A673 (cell line): ENCODE measurements at regions of chr2 and their contacts with region 1.

Region 1: DNA sequence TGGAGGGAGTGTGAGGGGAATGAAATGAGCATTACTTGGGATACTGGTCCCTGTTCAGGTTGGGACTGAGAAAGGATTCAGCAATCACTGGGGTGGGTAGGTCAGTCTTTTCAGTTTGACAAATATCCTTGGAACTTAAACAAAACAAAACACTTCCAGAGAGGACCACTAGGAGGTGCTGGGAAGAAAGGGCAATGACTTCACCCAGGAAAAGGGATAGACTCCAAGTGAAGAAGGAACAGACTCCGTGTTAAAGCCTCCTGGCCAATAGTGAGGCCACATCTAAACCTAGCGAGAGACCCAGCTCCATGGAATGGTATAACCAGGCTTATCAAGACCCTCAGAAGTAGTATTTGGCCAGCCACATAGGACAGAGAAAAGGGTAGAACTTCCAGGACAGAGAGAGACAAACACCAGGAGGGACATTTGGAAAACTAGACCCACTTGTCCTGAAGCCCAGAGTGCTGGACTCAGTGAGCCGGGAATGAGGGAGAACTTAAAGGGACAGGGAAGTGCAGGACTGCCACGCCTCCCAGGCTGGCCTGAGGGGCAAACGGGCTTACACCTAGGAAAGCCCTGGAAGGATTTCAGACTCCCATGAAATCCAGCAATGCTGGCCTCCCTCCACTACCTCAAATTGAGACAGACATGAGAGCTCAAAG is 19.6 kb upstream of the KCNG3 start:
- DNase-seq: peak; percentile 77
- H3K4me3 ChIP-seq: no peak overlapping the region
- H3K27ac ChIP-seq: no peak overlapping the region
- H3K4me1 ChIP-seq: peaks cover 5% of the 10 kb centered on the region
- H3K27me3 ChIP-seq: no peaks in the 10 kb centered on the region
- CTCF ChIP-seq: peak; percentile 76

Region 2: GRCh38 chr2:42124011-42124785 is 389.2 kb before region 1 on chr2:
- CTCF ChIA-PET with region 1: interaction called, 10 read pairs
- POLR2A ChIA-PET with region 1: no interaction called
- intact Hi-C with region 1: no loop called
- DNase-seq: no peak
- H3K4me3 ChIP-seq: no peak overlapping the region
- H3K27ac ChIP-seq: no peak overlapping the region
- H3K4me1 ChIP-seq: peaks cover 27% of the 10 kb centered on the region
- H3K27me3 ChIP-seq: no peaks in the 10 kb centered on the region
- CTCF ChIP-seq: no peak

Region 3: DNA sequence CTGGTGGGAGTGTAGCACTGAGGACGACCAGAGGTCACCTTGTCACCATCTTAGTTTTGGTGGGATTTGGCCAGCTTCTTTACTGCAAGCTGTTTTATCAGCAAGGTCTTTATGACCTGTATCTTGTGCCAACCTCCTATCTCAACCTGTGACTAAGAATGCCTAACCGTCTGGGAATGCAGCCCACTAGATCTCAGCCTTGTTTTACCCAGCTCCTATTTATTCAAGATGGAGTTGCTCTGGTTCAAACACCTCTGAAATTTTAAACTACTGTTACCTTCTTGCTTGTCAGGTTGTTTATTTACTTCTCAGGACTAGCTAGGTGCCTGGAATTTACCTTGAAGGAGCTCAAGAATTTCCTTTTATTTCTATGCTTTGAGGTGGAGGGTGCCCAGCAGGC is 10.1 kb before region 1 on chr2:
- CTCF ChIA-PET with region 1: no interaction called
- POLR2A ChIA-PET with region 1: no interaction called
- intact Hi-C with region 1: no loop called
- DNase-seq: no peak
- H3K4me3 ChIP-seq: no peak overlapping the region
- H3K27ac ChIP-seq: no peak overlapping the region
- H3K4me1 ChIP-seq: no peaks in the 10 kb centered on the region
- H3K27me3 ChIP-seq: no peaks in the 10 kb centered on the region
- CTCF ChIP-seq: no peak

Region 4: DNA sequence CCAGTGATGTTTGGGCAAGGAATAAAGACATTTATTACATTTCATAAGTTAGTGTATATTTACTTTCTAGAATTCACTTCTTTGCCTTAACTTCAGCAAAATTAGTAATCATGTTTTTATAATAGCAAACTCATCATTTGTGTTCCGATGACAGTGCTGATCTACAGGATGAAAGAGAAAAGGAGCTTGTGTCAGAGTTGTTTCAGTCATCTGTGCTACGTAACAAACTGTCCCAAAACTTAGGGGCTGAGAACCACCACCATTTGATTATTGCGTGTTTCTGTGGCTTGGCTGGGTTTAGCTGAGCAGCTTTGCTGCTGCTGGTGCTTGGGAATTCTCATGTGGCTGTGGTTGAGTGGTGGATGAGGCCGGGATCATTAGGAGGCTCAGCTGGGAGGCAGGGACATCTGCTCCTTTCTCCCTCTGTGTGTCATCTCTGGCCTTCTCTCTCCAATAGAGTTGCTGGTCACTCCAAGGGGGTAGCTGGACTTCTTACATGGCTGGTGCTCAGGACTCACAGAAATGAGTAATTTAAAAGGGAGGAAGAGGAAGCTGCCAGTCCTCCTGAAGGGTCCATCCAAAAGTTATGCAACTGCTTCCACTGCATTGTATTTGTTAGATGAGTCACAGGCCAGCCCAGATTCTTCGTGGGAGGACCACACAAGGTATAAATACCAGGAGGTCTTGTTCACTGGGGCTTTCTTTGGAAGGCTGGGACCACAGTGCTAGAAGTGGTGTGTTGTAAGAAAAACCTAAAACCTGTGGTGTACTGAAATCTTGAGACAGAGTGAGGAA is 322.4 kb after region 1 on chr2:
- CTCF ChIA-PET with region 1: no interaction called
- POLR2A ChIA-PET with region 1: no interaction called
- intact Hi-C with region 1: no loop called
- DNase-seq: peak; percentile 27
- H3K4me3 ChIP-seq: no peak overlapping the region
- H3K27ac ChIP-seq: no peak overlapping the region
- H3K4me1 ChIP-seq: peaks cover 3% of the 10 kb centered on the region
- H3K27me3 ChIP-seq: no peaks in the 10 kb centered on the region
- CTCF ChIP-seq: no peak